Breast epithelium (tissue), 4 donors: ENCODE measurements at regions of chr11 and their contacts with region 1.

Region 1: DNA sequence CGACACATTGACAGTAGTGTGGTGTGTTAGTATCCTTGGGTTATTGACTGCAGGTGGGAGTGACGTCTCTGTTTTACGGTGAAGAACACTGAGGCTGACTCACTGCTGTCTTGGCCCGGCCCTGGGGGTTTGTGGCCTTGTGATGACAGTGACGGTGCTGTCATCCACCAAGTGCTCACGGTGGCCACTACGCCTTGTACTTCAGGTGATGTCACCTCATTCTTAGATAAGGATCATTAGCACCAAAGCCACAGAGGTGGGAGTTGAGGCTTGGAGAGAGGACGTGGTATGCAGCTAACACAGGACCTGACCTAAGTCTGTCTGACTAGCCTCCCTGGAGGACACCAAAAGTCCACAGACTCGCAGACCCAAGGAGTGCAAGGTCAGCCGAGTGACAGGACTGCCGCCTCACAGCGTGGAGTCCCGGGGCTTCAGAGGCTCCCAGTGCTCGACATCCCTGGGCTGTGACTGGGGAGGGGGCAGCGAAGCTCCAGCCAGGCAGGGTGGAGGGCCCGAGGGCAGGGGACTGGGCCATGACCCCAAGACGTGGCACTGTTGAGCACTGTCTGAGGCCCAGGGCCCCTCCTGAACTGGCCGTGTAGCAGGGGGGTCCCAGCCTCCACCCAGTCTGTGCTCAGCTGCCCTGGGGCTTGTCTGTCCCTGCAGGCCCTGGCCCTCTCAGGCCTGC is 56.5 kb downstream of the NAT10 start:
- DNase-seq: no peak
- H3K4me3 ChIP-seq: no peak overlapping the region
- H3K27ac ChIP-seq: no peak overlapping the region
- H3K4me1 ChIP-seq: no peaks in the 10 kb centered on the region
- H3K27me3 ChIP-seq: no peaks in the 10 kb centered on the region
- CTCF ChIP-seq: no peak
- POLR2A ChIP-seq: no peak

Region 2: DNA sequence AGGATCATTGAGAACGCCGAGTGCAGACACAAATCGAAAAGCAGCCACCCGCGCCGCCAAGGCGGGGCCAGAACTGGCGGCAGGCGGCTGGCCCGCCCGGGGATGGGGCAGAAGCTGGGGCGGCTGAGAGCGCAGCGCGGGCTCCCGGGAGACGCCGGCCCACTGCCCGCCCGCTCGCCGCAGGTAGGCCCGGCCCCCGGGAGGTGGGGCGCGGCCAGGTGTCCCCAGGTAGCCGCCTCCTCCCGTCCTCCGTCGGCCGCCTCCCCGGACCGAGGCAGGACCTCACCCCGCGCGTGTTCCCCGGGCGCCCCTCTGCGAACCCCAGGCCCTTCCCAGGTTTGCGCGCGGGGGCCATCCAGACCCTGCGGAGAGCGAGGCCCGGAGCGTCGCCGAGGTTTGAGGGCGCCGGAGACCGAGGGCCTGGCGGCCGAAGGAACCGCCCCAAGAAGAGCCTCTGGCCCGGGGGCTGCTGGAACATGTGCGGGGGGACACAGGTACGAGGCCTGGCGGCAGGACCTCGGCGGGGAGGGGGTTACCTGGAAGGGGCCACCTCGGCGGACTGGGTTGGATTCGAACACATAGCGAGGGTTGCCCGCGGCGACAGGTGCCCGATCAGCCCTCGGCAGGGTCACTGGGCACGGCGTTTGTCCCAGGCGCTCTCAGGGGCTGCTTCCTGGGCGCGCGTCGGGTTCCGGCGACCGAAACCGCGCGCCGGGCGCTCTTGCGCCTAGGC is 1332.1 kb before region 1 on chr11 and contains the start of gene PRRG4:
- intact Hi-C with region 1: loop called (anchors 5 kb)
- DNase-seq: peak; percentile 71 to 82
- H3K4me3 ChIP-seq: peak within 1 kb of the TSS; percentile 53 to 76 (median 75)
- H3K27ac ChIP-seq: peak within 1 kb of the TSS; percentile 76 to 89
- H3K4me1 ChIP-seq: no peaks in the 10 kb centered on the region
- H3K27me3 ChIP-seq: no peaks in the 10 kb centered on the region
- CTCF ChIP-seq: no peak
- POLR2A ChIP-seq: no peak
- total RNA-seq, gene PRRG4: 2.2 to 25.5 (median 9.5) TPM

Region 3: GRCh38 chr11:33642461-33643166 is 519.3 kb before region 1 on chr11:
- intact Hi-C with region 1: no loop called
- DNase-seq: no peak
- H3K4me3 ChIP-seq: no peak overlapping the region
- H3K27ac ChIP-seq: no peak overlapping the region
- H3K4me1 ChIP-seq: no peaks in the 10 kb centered on the region
- H3K27me3 ChIP-seq: no peaks in the 10 kb centered on the region
- CTCF ChIP-seq: no peak
- POLR2A ChIP-seq: no peak

Region 4: DNA sequence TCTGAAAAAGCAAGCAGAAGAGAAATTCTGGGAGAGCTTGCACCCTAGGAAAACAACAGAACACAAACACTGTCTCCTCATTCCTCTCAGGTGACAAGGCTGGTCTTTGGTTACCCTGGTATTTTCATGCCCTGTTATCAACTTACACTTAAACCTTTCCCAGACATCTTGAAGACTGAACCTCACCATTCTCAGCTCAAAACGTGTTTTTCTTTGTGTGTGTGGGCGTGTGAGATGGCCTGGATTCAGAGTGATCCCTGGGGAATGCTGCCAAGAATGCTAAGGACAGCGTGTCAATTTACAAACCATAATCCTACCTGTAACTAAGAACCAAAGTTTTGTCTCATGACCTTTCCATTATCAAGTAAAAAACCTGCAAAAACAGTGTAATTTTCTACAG is 318.4 kb after region 1 on chr11:
- intact Hi-C with region 1: loop called (anchors 10 kb)
- DNase-seq: peak in 1 of 2 donors; percentile 30
- H3K4me3 ChIP-seq: no peak overlapping the region
- H3K27ac ChIP-seq: peak overlapping the region in 1 of 2 donors; percentile 38
- H3K4me1 ChIP-seq: no peaks in the 10 kb centered on the region
- H3K27me3 ChIP-seq: no peaks in the 10 kb centered on the region
- CTCF ChIP-seq: no peak
- POLR2A ChIP-seq: no peak